ENCODE measurements at regions of chr20 and their contacts with region 1.

Region 1: GRCh38 chr20:35741892-35742740 is at the start of gene RBM39:
- DNase-seq: peak; percentile 100
- H3K4me3 ChIP-seq: peak within 1 kb of the TSS; percentile 88 to 92
- H3K27ac ChIP-seq: peak within 1 kb of the TSS; percentile 99
- H3K4me1 ChIP-seq: peaks cover 5 to 47% (median 31%) of the 10 kb centered on the region in 4 donors
- H3K27me3 ChIP-seq: no peaks in the 10 kb centered on the region
- CTCF ChIP-seq: peak; percentile 38 to 52

Region 2: DNA sequence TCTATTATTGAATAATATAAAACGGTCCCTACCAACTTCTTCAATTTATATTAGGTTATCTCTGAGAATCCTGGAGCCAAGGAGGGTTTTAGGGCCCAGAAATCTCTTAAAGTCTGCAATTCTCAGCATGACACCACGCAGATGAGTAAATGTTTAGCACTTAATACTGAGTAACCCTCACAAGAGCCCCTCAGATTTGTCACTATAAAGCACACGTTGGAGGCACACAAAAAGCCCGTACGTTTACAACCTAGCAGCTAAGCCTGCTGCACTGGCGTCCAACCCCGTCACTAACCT is 78.7 kb before region 1 on chr20:
- intact Hi-C with region 1: no loop called
- DNase-seq: no peak
- H3K4me3 ChIP-seq: peak overlapping the region; percentile 67 to 87
- H3K27ac ChIP-seq: peak overlapping the region; percentile 93 to 99
- H3K4me1 ChIP-seq: peaks cover 0 to 51% (median 25%) of the 10 kb centered on the region in 4 donors
- H3K27me3 ChIP-seq: no peaks in the 10 kb centered on the region
- CTCF ChIP-seq: no peak

Region 3: DNA sequence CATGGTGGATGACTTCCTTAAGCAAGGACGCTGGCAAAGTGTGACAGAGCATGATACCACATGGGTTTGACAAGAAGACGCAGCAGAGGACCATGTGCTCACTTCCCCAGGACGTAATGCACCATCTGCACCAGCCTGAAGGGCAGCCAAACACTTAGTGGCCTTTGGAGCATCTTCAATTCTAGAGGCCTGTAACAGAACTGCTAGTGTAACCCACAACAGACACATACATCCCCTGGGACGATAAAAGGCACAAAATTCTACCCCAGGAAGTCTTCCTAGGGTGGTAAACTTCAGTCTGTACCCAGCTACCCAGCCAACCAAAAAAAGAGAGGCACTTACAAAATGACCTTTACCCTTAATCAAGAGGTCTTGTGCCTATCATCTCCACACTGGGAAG is 68.2 kb before region 1 on chr20:
- intact Hi-C with region 1: no loop called
- DNase-seq: no peak
- H3K4me3 ChIP-seq: no peak overlapping the region
- H3K27ac ChIP-seq: no peak overlapping the region
- H3K4me1 ChIP-seq: no peaks in the 10 kb centered on the region
- H3K27me3 ChIP-seq: no peaks in the 10 kb centered on the region
- CTCF ChIP-seq: no peak

Region 4: GRCh38 chr20:35771689-35772562 is 29.8 kb after region 1 on chr20 and contains the start of gene PHF20:
- intact Hi-C with region 1: loop called (anchors 2 kb)
- DNase-seq: peak; percentile 99 to 100
- H3K4me3 ChIP-seq: peak within 1 kb of the TSS; percentile 64 to 87
- H3K27ac ChIP-seq: peak within 1 kb of the TSS; percentile 93 to 95
- H3K4me1 ChIP-seq: peaks cover 0 to 63% (median 43%) of the 10 kb centered on the region in 4 donors
- H3K27me3 ChIP-seq: no peaks in the 10 kb centered on the region
- CTCF ChIP-seq: peak in 1 of 2 experiments; percentile 56

Measured in tibial artery (tissue), 4 donors.